Calu3 (cell line): ENCODE measurements at regions of chr16 and their contacts with region 1.

Region 1: GRCh38 chr16:24800586-24800985 is 45.2 kb upstream of the SLC5A11 start:
- DNase-seq: peak; percentile 55
- H3K4me3 Mint-ChIP-seq: no peak overlapping the region
- H3K27ac Mint-ChIP-seq: no peak overlapping the region
- H3K4me1 Mint-ChIP-seq: no peaks in the 10 kb centered on the region
- H3K27me3 Mint-ChIP-seq: no peaks in the 10 kb centered on the region
- CTCF ChIP-seq: peak; percentile 39

Region 2: DNA sequence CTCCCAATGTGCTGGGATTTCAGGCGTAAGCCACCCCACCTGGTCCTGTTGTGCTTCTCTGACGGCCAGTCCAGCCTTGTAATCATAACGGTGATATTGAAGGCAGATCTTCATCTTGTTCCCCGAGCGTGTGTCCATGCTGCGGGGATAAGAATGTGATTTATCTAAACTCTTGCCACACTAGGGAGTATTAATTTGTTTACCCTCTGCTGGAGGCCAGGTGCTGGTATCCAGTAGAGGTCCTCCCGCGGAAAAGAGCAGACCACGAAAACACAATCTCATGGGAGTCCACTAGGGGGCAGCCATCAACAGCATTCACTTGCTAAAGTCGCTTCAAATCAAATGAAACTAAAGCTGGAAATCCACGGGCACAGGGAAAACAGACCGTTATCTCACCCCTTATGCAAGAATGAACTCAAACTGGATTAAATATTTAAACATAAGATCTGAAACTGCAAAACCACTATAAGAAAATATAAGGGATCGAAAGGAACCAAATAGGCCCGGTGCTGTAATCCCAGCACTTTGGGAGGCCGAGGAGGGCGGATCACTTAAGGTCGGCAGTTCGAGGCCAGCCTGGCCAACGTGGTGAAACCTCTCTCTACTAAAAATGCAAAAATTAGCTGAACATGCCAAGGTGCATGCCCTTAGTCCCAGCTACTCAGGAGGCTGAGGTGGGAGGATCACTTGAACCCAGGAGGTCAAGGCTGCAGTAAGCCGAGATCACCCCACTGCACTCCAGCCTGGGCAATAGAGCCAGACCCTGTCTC is 283.5 kb before region 1 on chr16:
- CTCF ChIA-PET with region 1: interaction called, 5 read pairs
- intact Hi-C with region 1: loop called (anchors 1 kb)
- DNase-seq: peak; percentile 91
- H3K4me3 Mint-ChIP-seq: peak overlapping the region; percentile 36
- H3K27ac Mint-ChIP-seq: no peak overlapping the region
- H3K4me1 Mint-ChIP-seq: peaks cover 14% of the 10 kb centered on the region
- H3K27me3 Mint-ChIP-seq: peaks cover 47% of the 10 kb centered on the region
- CTCF ChIP-seq: peak; percentile 82

Region 3: DNA sequence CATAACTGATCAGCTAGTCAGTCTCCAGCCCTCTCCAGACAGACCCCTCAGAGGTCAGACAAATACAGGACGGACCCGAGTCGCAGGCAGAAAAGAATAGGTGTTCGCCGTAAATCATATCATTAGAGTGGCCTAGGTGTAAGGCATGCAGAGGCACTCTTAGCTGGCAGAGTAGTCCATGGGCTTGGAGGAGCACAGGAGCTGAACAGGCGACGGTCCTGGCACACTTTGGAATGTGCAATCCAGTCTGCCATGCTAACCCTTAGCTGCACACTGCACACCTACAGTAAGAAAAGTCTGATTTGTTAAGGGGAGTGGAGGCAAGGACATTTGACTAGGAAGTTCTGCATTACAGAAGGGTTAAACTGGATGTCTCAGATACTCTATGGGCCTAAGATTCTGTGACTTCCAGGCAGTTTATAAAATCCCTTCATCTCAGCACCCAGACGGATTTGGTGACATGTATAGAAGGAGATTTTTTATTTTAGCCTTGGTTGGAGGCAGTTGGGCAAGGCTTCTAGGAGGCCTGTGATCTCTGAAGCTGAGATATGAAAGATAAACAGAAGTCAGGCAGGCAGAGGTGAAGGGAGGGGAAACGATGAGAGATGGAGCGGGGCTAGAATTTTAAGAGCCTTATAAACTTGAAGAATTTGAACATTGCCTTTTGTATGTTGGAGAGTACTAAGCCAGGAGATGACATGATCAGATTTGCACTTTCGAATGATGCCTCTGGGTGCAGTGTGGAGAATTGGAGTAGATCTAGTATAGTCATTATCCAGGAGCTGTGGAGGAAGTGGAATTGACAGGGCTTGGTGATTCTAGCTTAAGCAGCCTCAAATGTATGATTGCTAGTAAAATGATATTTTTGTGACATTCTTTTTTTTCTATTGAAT is 10.6 kb after region 1 on chr16:
- CTCF ChIA-PET with region 1: no interaction called
- intact Hi-C with region 1: no loop called
- DNase-seq: no peak
- H3K4me3 Mint-ChIP-seq: no peak overlapping the region
- H3K27ac Mint-ChIP-seq: no peak overlapping the region
- H3K4me1 Mint-ChIP-seq: no peaks in the 10 kb centered on the region
- H3K27me3 Mint-ChIP-seq: no peaks in the 10 kb centered on the region
- CTCF ChIP-seq: no peak

Region 4: DNA sequence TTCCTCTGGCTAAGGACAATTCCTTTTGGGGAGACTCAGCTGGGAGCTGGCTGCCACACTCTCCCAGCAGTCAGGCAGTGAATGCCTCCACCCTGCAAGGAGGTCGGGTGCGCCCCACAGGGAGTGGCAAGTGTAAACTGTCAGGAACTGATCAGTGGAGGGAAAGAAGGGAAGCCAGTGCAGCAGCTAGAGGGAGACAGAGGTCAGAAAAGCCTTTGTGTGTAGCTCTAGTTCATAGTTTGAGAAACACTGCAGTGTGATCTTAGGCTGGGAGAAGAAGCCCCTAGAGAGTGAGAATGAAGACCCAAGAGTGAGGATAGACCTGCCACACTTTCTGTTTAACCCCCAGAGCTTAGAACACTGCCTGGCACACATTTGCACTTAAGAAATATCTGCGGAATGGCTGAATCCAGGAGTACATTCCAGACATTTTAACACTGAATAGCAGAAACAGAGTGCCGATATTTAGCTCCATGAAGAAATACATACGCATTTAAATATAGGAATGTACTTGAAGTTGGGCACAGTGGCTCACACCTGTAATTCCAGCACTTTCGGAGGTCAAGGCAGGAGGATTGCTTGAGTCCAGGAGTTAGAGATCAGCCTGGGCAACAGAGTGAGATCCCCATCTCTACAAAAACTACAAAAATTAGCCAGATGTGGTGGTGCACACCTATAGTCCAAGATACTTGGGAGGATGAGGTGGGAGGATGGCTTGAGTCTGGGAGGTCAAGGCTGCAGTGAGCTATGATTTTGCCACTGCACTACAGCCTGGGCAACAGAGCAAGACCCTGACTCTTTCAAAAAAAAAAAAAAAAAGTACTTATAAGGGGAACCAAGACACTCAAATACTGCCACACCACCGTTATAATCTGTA is 34.1 kb after region 1 on chr16:
- CTCF ChIA-PET with region 1: no interaction called
- intact Hi-C with region 1: no loop called
- DNase-seq: peak; percentile 67
- H3K4me3 Mint-ChIP-seq: no peak overlapping the region
- H3K27ac Mint-ChIP-seq: no peak overlapping the region
- H3K4me1 Mint-ChIP-seq: peaks cover 13% of the 10 kb centered on the region
- H3K27me3 Mint-ChIP-seq: no peaks in the 10 kb centered on the region
- CTCF ChIP-seq: peak; percentile 70

Region 5: GRCh38 chr16:24993722-24994686 is 193.4 kb after region 1 on chr16:
- CTCF ChIA-PET with region 1: no interaction called
- intact Hi-C with region 1: no loop called
- DNase-seq: peak; percentile 50
- H3K4me3 Mint-ChIP-seq: no peak overlapping the region
- H3K27ac Mint-ChIP-seq: peak overlapping the region; percentile 22
- H3K4me1 Mint-ChIP-seq: peaks cover 63% of the 10 kb centered on the region
- H3K27me3 Mint-ChIP-seq: no peaks in the 10 kb centered on the region
- CTCF ChIP-seq: no peak